Activated T-helper 2 cell treated with anti-CD3 and anti-CD28 coated beads, Interferon-gamma antibody, Interleukin-2, Interleukin-4, amounts not matched to agents 10 μg/mL and 5 μg/mL and 100 μg/mL, durations not matched to agents 14 hours and 24 hours and 36 hours (primary cell): ENCODE measurements at regions of chr7 and their contacts with region 1.

Region 1: DNA sequence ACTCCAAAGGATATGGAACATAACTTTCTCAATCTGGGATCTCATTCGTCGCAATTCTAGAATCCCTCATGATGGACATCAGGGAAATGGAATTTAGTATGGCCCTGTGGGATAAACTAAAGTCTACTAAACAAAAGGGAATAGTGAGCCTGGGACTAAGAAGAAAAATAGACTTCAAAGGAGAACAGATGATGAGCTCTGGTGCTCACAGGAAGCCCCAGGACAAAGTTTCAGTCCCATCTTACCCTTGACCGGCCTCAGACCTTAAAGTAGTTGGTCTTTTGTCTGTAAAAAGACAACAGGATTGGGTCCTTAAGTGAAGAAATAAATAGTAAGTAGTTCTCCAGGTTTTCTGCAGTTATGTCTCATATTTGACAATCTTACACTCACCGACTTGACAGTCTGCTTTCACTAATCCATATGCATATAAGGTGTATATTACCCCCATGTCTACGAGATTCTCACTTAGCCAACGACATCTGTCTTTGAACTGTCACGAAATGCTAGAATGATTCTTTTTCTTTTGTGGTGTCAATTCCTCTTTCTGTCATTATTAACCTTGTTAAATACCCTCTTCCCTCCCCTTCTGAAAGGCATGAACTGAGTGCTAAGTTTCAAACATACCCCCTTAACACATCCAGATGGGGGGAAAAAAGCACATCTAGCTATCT is 10.9 kb upstream of the IKZF1 start:
- DNase-seq: no peak
- H3K4me3 Mint-ChIP-seq: no peak overlapping the region
- H3K27ac Mint-ChIP-seq: no peak overlapping the region
- H3K4me1 Mint-ChIP-seq: peaks cover 34% of the 10 kb centered on the region
- H3K27me3 Mint-ChIP-seq: peaks cover 5% of the 10 kb centered on the region

Region 2: GRCh38 chr7:50261593-50261992 is 32.1 kb before region 1 on chr7:
- intact Hi-C with region 1: no loop called
- DNase-seq: no peak
- H3K4me3 Mint-ChIP-seq: peak overlapping the region; percentile 61
- H3K27ac Mint-ChIP-seq: peak overlapping the region; percentile 89
- H3K4me1 Mint-ChIP-seq: peaks cover 69% of the 10 kb centered on the region
- H3K27me3 Mint-ChIP-seq: no peaks in the 10 kb centered on the region

Region 3: GRCh38 chr7:50281680-50282445 is 11.8 kb before region 1 on chr7:
- intact Hi-C with region 1: loop called (anchors 2 kb)
- DNase-seq: no peak
- H3K4me3 Mint-ChIP-seq: peak overlapping the region; percentile 28
- H3K27ac Mint-ChIP-seq: peak overlapping the region; percentile 53
- H3K4me1 Mint-ChIP-seq: peaks cover 44% of the 10 kb centered on the region
- H3K27me3 Mint-ChIP-seq: no peaks in the 10 kb centered on the region